Activated naive CD4-positive, alpha-beta T cell treated with anti-CD3 and anti-CD28 coated beads for 36 hours (primary cell): ENCODE measurements at regions of chr17 and their contacts with region 1.

Region 1: GRCh38 chr17:49707608-49708514 is at the start of gene SLC35B1:
- DNase-seq: peak; percentile 99
- H3K4me3 Mint-ChIP-seq: peak within 1 kb of the TSS; percentile 84
- H3K27ac Mint-ChIP-seq: peak within 1 kb of the TSS; percentile 98
- H3K4me1 Mint-ChIP-seq: peaks cover 36% of the 10 kb centered on the region
- H3K27me3 Mint-ChIP-seq: no peaks in the 10 kb centered on the region
- total RNA-seq, gene SLC35B1: 35.3 to 39.5 TPM

Region 2: GRCh38 chr17:49471089-49471683 is 236.7 kb before region 1 on chr17:
- CTCF ChIA-PET with region 1: no interaction called
- intact Hi-C with region 1: no loop called
- DNase-seq: no peak
- H3K4me3 Mint-ChIP-seq: no peak overlapping the region
- H3K27ac Mint-ChIP-seq: no peak overlapping the region
- H3K4me1 Mint-ChIP-seq: peaks cover 5% of the 10 kb centered on the region
- H3K27me3 Mint-ChIP-seq: peaks cover 63% of the 10 kb centered on the region

Region 3: DNA sequence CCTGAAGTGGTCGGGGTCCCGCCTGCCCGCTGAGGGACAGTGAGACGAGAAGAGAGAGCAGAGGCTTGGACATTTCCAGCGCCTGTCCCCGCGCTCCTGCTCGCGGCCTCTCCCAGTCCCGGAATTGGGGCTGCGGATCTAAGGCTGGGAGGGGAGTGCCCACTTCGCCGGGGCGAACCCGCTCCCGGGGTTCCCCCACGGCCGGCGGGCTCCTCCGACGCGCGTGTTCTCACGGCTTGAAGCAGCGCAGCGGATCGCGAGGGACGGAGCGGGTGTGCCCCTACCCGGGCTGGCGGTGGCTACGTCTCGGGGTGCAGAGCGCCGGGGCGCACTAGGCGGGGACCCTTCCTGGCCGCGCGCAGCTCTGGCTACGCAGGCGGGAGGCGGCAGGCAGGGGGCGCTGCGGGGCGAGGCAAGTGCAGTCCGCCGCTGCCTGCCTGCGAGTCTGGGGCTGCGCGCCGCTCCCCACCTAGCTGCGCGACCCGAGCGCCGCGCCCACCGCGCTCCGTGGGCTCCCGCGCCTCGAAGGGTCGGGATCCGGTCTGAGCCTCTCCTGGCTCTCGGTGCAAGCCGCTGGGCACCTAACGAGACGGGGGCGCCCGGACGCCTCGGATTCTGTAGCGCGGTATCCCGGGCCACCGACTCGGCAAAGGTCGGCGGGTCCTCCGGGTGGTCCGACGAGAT is 211.5 kb before region 1 on chr17:
- CTCF ChIA-PET with region 1: no interaction called
- intact Hi-C with region 1: loop called (anchors 5 kb)
- DNase-seq: peak; percentile 84
- H3K4me3 Mint-ChIP-seq: peak overlapping the region; percentile 65
- H3K27ac Mint-ChIP-seq: no peak overlapping the region
- H3K4me1 Mint-ChIP-seq: peaks cover 19% of the 10 kb centered on the region
- H3K27me3 Mint-ChIP-seq: peaks cover 53% of the 10 kb centered on the region

Region 4: DNA sequence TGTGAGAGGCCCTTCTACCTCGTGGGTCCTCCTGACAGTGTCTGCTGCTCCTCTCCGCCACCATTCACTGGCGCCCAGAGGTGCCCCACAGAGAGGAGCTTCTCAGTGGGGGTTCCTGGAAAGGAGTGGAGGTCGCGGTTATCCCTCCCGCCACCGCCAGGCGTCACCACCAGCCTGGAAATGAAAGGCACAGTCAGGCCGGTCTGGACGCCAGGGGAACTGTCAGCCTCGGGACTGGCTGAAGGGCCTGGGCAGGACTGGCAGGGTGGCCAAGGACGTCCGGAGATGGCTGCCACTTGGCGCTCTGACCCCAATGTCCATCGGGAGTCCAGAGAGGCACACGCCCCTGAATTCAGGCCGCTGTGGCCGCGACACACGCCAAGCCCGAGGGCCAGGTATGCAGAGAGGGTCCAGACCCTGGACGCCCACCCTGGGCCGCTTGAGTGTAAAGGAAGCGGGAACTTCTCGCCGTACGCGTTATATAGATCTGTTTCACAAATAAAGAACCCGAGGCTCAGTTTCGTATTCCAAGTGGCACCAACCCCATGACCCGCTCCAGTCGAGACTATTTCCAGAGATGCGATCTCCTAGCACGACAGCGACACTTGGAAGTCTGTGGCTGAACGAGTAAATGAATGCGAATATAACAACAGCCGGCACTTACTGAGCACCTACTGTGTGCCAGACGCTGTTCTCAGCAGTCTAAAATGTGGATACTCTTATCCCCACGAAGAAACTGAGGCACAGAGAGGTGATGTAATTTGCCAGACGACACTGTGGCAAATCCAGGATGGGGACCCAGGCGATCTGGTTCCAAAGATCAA is 139.8 kb before region 1 on chr17:
- CTCF ChIA-PET with region 1: interaction called, 71 read pairs
- intact Hi-C with region 1: loop called (anchors 1 kb)
- DNase-seq: peak; percentile 89
- H3K4me3 Mint-ChIP-seq: peak overlapping the region; percentile 74
- H3K27ac Mint-ChIP-seq: no peak overlapping the region
- H3K4me1 Mint-ChIP-seq: peaks cover 15% of the 10 kb centered on the region
- H3K27me3 Mint-ChIP-seq: peaks cover 8% of the 10 kb centered on the region

Region 5: DNA sequence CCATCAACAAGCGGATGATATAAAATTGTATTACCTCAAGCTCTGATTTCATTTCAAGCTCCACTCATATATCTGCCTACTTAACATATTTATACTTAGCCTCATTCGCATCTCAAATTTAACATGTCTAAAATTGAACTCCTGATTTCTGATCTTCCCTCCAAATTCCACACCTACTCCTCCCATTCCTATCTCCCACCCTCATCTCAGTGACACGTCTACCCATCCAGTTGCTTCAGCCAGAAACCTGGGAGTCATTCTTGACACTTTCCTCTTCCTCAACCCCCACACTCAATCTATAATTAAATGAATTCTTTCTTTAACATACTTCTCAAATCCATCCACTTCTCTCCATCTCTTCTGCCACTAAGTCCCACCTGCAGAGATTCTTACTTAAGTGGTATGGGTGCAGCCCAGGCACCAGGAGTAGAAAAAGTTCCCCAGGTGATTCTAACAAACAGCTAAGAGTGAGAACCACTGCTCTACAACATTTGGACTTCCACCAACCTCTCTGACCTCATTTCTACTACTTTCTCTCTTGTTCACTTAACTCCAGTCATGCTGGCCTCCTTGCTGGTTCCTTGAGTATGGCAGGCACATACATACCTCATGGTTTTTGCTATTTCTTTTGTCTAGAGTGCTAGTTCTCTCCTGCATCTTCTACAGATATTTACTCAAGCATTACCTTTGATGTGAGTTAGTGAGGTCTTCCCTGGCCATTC is 48.0 kb before region 1 on chr17:
- CTCF ChIA-PET with region 1: no interaction called
- intact Hi-C with region 1: no loop called
- DNase-seq: no peak
- H3K4me3 Mint-ChIP-seq: no peak overlapping the region
- H3K27ac Mint-ChIP-seq: no peak overlapping the region
- H3K4me1 Mint-ChIP-seq: peaks cover 42% of the 10 kb centered on the region
- H3K27me3 Mint-ChIP-seq: no peaks in the 10 kb centered on the region

Region 6: GRCh38 chr17:49694847-49695683 is 12.8 kb before region 1 on chr17:
- CTCF ChIA-PET with region 1: interaction called, 31 read pairs
- intact Hi-C with region 1: loop called (anchors 1 kb)
- DNase-seq: peak; percentile 87
- H3K4me3 Mint-ChIP-seq: no peak overlapping the region
- H3K27ac Mint-ChIP-seq: peak overlapping the region; percentile 92
- H3K4me1 Mint-ChIP-seq: peaks cover 39% of the 10 kb centered on the region
- H3K27me3 Mint-ChIP-seq: no peaks in the 10 kb centered on the region

Region 7: DNA sequence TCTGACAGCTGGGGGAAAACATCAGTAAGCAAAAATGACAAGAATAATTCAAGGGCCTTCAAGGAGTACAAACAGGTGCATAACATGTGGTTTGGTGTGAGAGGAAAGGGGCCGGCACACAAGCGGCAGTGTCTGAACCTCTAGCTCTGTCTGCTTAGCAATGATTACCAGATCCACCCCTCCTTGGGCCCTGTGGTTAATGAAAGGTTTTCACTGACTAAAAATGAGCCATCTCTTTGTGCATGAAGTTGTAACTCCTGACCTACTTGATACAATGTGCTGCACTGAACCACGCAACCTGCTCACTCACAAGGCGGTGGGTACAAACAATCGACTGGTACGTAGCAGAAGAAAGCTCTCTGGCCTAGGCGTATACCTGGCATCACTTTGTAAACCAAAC is 40.9 kb after region 1 on chr17:
- CTCF ChIA-PET with region 1: interaction called, 7 read pairs
- intact Hi-C with region 1: loop called (anchors 1 kb)
- DNase-seq: peak; percentile 86
- H3K4me3 Mint-ChIP-seq: peak overlapping the region; percentile 14
- H3K27ac Mint-ChIP-seq: peak overlapping the region; percentile 91
- H3K4me1 Mint-ChIP-seq: peaks cover 78% of the 10 kb centered on the region
- H3K27me3 Mint-ChIP-seq: no peaks in the 10 kb centered on the region

Region 8: GRCh38 chr17:49779739-49780231 is 71.9 kb after region 1 on chr17:
- CTCF ChIA-PET with region 1: interaction called, 15 read pairs
- intact Hi-C with region 1: loop called (anchors 1 kb)
- DNase-seq: peak; percentile 60
- H3K4me3 Mint-ChIP-seq: no peak overlapping the region
- H3K27ac Mint-ChIP-seq: no peak overlapping the region
- H3K4me1 Mint-ChIP-seq: no peaks in the 10 kb centered on the region
- H3K27me3 Mint-ChIP-seq: no peaks in the 10 kb centered on the region

Region 9: DNA sequence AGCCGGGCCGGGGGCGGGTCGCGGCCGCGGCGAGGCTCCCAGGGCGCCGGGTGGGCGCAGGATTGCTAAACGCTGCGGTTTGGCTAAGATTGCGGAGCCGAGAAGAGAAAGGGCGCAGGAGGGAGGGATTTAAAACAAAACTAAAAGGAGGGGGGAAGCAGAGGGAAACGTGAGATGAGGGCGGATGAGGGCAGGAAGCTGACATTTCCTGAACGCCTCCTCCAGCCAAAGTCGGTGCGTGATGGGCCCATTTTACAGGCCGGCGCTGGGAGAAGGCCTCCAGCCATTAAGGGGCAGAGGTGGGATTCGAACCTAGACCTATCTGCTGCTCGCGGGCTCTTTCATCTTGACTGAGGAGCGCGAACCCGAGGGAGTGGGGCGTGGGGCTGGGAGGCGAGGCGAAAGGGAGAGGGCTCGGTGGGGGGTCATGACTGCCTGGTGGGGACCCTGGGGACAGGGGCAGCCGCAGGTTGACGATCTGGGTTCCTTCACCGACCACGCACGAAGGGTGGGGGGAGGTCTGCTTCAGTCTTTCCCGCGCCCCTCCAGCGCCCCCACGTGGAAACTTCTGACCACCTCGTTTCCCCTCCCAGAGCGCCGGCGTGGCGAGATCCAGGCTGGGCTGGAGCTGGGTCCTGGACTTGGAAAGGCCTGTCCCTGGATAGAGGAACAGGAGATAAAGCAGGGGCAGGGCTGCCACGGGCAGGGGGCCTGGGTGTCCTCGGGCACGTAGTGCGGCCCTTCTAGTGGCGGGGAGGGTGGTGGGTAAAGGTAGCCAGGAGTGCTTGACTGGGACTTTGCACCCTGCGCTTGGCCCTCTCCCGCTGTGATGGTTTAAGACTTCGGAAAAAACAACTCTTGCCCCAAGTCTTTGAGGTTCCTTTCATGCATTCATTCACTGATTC is 143.8 kb after region 1 on chr17:
- CTCF ChIA-PET with region 1: no interaction called
- intact Hi-C with region 1: loop called (anchors 1 kb)
- DNase-seq: peak; percentile 76
- H3K4me3 Mint-ChIP-seq: peak overlapping the region; percentile 78
- H3K27ac Mint-ChIP-seq: peak overlapping the region; percentile 64
- H3K4me1 Mint-ChIP-seq: peaks cover 12% of the 10 kb centered on the region
- H3K27me3 Mint-ChIP-seq: peaks cover 2% of the 10 kb centered on the region